ENCODE measurements at regions of chr9 and their contacts with region 1.

Region 1: DNA sequence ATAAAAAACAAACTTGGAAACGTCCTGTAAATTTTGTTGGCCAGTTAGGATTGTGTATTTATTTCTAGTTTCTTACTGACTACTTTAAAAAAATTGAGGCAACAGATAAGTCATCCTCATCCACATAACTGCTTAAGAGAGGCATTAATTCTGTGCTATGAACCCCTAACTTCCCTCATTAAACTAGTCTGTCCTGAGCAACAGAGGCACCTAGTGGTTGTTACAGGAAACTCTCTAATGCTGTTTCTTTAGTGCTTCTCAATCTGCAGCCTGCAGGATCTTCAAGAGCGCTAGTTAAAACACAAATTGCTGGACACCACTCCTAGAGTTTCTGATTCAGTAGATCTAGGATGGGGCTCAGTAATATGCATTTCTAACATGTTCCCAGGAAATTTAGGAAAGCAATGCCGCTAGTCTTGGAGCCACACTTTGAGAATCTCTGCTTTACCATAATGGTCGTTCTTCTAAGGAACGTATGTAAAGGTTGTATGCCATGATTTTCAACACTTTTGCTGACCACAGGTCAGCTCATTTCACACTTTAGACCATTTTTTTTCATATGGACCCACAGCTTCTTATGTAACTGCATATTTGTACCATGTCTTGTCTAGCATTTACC is 410.1 kb upstream of the SMARCA2 start:
- DNase-seq: peak; percentile 58
- H3K4me3 Mint-ChIP-seq: no peak overlapping the region
- H3K27ac Mint-ChIP-seq: no peak overlapping the region
- H3K4me1 Mint-ChIP-seq: no peaks in the 10 kb centered on the region
- H3K27me3 Mint-ChIP-seq: no peaks in the 10 kb centered on the region

Region 2: DNA sequence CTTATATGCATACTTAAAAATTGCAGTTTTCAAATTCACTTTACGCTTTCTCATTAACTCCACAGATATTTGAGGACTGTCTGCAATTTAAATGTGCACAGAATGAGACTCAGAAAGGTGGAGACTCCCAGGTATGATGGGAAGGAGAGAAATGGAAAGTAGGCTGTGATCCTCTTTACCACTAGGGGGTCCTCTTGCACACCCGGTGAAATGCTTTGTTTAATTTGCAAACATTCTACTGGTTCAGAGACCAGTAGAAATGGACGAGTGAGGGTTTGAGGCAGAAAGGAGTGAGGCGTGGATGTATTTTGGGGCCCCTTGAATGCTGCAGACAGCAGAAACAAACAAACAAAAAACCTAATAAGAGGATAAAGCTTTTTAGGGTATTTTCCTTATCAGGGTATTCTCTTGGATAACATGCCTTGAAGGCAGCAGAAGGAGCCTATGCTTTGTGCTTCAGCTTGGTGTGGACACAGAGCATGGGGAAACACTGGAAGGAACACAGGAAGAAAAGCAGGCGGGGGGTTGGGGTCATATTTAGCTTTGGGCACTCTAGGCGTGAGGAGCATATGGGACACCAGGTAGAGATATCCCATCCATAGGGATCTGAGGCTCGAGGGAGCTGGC is 144.8 kb before region 1 on chr9:
- intact Hi-C with region 1: loop called (anchors 2 kb)
- DNase-seq: peak; percentile 58
- H3K4me3 Mint-ChIP-seq: no peak overlapping the region
- H3K27ac Mint-ChIP-seq: no peak overlapping the region
- H3K4me1 Mint-ChIP-seq: no peaks in the 10 kb centered on the region
- H3K27me3 Mint-ChIP-seq: no peaks in the 10 kb centered on the region

Region 3: GRCh38 chr9:1550636-1551035 is 54.4 kb before region 1 on chr9:
- intact Hi-C with region 1: no loop called
- DNase-seq: no peak
- H3K4me3 Mint-ChIP-seq: no peak overlapping the region
- H3K27ac Mint-ChIP-seq: no peak overlapping the region
- H3K4me1 Mint-ChIP-seq: no peaks in the 10 kb centered on the region
- H3K27me3 Mint-ChIP-seq: no peaks in the 10 kb centered on the region

Measured in activated CD4-positive, alpha-beta T cell treated with anti-CD3 and anti-CD28 coated beads, Interleukin-2, amount 10 ng/mL, durations not matched to agents 24 days and 14 days (primary cell).